T-cell (primary cell): ENCODE measurements at regions of chr20 and their contacts with region 1.

Region 1: DNA sequence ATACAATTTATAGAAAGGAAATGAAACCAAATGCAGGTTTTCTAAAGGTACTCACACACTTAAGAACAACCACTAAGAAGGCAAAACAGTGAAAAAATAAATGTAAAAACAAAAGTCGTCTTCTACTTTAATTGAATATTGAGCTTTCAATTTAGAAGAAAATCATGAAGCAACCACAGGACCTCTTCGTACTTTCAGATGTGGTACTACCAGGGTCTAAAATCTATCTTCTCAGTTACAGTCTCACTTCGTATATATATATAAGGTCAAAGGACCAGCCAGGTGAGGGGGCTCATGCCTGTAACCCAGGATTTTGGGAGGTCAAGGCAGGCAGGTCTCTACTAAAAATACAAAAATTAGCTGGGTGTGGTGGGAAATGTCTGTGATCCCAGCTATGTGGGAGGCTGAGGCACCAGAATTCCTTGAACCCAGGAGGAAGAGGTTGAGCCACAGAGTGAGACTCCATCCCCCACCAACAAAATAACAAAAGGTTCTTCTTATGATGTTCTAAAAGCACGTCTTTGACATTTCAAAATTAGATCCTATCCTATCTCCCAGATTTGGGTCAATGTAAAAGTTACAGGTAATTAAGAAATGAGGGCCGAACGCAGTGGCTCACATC is 12.5 kb downstream of the ROMO1 start:
- DNase-seq: no peak
- ATAC-seq: no peak
- H3K4me3 ChIP-seq: no peak overlapping the region
- H3K4me3 Mint-ChIP-seq: peak overlapping the region; percentile 39 to 47 (median 43)
- H3K27ac ChIP-seq: peak overlapping the region; percentile 35
- H3K27ac Mint-ChIP-seq: peak overlapping the region; percentile 78 to 79
- H3K4me1 ChIP-seq: peaks cover 2 to 26% of the 10 kb centered on the region in 2 experiments
- H3K4me1 Mint-ChIP-seq: peaks cover 49 to 64% (median 61%) of the 10 kb centered on the region in 3 donors
- H3K27me3 ChIP-seq: no peaks in the 10 kb centered on the region
- H3K27me3 Mint-ChIP-seq: no peaks in the 10 kb centered on the region

Region 2: DNA sequence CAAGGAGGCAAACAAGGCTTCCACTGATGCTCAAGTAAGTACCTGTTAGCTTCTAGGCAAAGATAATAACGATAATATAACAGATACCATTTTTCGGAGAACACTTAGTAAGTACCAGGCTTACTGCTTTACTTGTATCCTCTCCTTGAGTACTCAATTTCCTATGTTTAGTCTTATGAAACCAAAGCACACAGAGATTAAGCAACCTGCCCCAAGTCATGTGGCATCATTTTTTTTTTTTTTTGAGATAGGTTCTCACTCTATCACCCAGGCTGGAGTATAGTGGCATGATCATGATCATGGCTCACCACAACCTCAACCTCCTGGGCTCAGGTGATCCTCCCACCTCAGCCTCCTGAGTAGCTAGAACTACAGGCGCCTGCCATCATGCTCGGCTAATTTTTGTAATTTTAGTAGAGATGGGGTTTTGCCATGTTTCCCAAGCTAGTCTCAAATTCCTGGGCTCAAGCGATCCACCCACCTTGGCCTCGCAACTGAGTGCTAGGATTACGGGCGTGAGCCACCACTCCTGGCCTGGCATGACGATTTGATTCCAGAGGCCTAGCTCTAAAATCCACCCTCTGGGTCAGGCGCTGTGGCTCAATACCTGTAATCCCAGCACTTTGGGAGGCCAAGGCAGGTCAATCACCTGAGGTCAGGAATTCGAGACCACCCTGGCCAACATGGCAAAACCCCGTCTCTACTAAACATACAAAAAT is 82.1 kb before region 1 on chr20:
- CTCF ChIA-PET with region 1: no interaction called
- POLR2A ChIA-PET with region 1: interaction called in 1 of 2 experiments, 10 read pairs
- DNase-seq: no peak
- ATAC-seq: no peak
- H3K4me3 ChIP-seq: no peak overlapping the region
- H3K4me3 Mint-ChIP-seq: no peak overlapping the region
- H3K27ac ChIP-seq: no peak overlapping the region
- H3K27ac Mint-ChIP-seq: no peak overlapping the region
- H3K4me1 ChIP-seq: peaks cover 0 to 3% of the 10 kb centered on the region in 2 experiments
- H3K4me1 Mint-ChIP-seq: peaks cover 2 to 17% (median 5%) of the 10 kb centered on the region in 3 donors
- H3K27me3 ChIP-seq: no peaks in the 10 kb centered on the region
- H3K27me3 Mint-ChIP-seq: no peaks in the 10 kb centered on the region

Region 3: DNA sequence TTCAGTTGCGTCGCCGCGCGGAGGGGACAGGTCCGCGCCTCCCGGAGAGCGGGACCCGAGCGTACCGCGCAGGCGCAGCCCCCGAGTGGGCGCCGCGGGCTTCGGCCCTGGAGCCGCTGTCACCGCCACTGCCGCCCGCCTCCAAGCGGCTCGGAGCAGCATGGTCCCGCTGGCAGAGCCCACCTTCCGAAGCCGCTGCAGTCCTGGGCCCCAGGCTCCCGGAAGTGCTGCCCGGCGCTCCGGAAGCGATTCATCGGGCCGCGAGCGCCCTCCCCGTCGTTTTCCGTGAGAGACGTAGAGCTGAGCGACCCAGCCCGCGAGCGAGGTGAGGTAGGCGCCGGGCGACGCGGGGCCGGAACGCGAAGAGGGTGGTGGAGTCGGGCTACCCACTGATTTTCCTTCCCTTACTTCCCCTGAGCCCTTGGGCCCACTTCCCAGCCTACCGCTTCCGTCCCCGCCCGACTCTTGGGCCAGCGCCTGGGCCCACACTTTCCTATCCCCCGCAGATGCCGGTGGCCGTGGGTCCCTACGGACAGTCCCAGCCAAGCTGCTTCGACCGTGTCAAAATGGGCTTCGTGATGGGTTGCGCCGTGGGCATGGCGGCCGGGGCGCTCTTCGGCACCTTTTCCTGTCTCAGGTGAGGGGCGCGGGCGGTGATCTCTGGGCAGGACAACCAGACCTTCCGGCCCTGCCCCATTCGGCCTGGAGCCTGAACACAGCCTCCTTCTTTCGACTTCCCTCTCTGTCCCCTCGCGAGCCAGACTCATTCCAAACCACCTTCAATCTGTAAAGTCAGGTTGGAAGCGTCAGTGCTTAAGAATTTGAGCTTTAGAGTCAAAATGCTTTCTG is 12.3 kb before region 1 on chr20 and contains the starts of genes NFS1 and ROMO1:
- CTCF ChIA-PET with region 1: interaction called in 1 of 2 experiments, 4 read pairs
- POLR2A ChIA-PET with region 1: interaction called, 5 to 10 read pairs
- DNase-seq: peak; percentile 59 to 93 (median 85)
- ATAC-seq: peak; percentile 86 to 95 (median 92)
- H3K4me3 ChIP-seq: peak within 1 kb of the TSS; percentile 66 to 94
- H3K4me3 Mint-ChIP-seq: peak within 1 kb of the TSS; percentile 87 to 100 (median 89)
- H3K27ac ChIP-seq: peak within 1 kb of the TSS; percentile 87
- H3K27ac Mint-ChIP-seq: peak within 1 kb of the TSS; percentile 89 to 93
- H3K4me1 ChIP-seq: peaks cover 16 to 19% of the 10 kb centered on the region in 2 experiments
- H3K4me1 Mint-ChIP-seq: peaks cover 47 to 60% (median 57%) of the 10 kb centered on the region in 3 donors
- H3K27me3 ChIP-seq: no peaks in the 10 kb centered on the region
- H3K27me3 Mint-ChIP-seq: no peaks in the 10 kb centered on the region
- total RNA-seq, gene NFS1: 17.7 to 33.5 (median 31.2) TPM
- total RNA-seq, gene ROMO1: 38.4 to 79.7 (median 62.5) TPM

Region 4: GRCh38 chr20:35729836-35730582 is 18.3 kb after region 1 on chr20:
- CTCF ChIA-PET with region 1: interaction called, 3 to 4 read pairs
- POLR2A ChIA-PET with region 1: interaction called, 9 to 29 read pairs
- DNase-seq: no peak
- ATAC-seq: no peak
- H3K4me3 ChIP-seq: no peak overlapping the region
- H3K4me3 Mint-ChIP-seq: peak overlapping the region in 2 of 3 donors; percentile 4 to 31
- H3K27ac ChIP-seq: no peak overlapping the region
- H3K27ac Mint-ChIP-seq: no peak overlapping the region
- H3K4me1 ChIP-seq: peaks cover 14 to 22% of the 10 kb centered on the region in 2 experiments
- H3K4me1 Mint-ChIP-seq: peaks cover 58 to 63% (median 62%) of the 10 kb centered on the region in 3 donors
- H3K27me3 ChIP-seq: no peaks in the 10 kb centered on the region
- H3K27me3 Mint-ChIP-seq: no peaks in the 10 kb centered on the region

Region 5: GRCh38 chr20:35735828-35736470 is 24.2 kb after region 1 on chr20:
- CTCF ChIA-PET with region 1: interaction called, 3 to 6 read pairs
- POLR2A ChIA-PET with region 1: interaction called, 9 to 29 read pairs
- DNase-seq: no peak
- ATAC-seq: no peak
- H3K4me3 ChIP-seq: no peak overlapping the region
- H3K4me3 Mint-ChIP-seq: peak overlapping the region; percentile 50 to 94 (median 54)
- H3K27ac ChIP-seq: peak overlapping the region; percentile 17
- H3K27ac Mint-ChIP-seq: peak overlapping the region in 1 of 2 donors; percentile 2
- H3K4me1 ChIP-seq: peaks cover 48 to 63% of the 10 kb centered on the region in 2 experiments
- H3K4me1 Mint-ChIP-seq: peaks cover 80 to 84% (median 82%) of the 10 kb centered on the region in 3 donors
- H3K27me3 ChIP-seq: no peaks in the 10 kb centered on the region
- H3K27me3 Mint-ChIP-seq: no peaks in the 10 kb centered on the region